ENCODE measurements at regions of chr3 and their contacts with region 1.

Region 1: GRCh38 chr3:4978204-4978965 is 852 bp upstream of the BHLHE40 start:
- DNase-seq: peak; percentile 73 to 93 (median 78)
- H3K4me3 ChIP-seq: peak overlapping the region; percentile 54 to 93
- H3K4me3 Mint-ChIP-seq: peak overlapping the region; percentile 93 to 100 (median 98)
- H3K27ac ChIP-seq: peak overlapping the region; percentile 91
- H3K27ac Mint-ChIP-seq: peak overlapping the region; percentile 95 to 100 (median 99)
- H3K4me1 ChIP-seq: peaks cover 48% of the 10 kb centered on the region
- H3K4me1 Mint-ChIP-seq: peaks cover 23 to 64% (median 46%) of the 10 kb centered on the region in 4 donors
- H3K27me3 ChIP-seq: no peaks in the 10 kb centered on the region
- H3K27me3 Mint-ChIP-seq: no peaks in the 10 kb centered on the region

Region 2: GRCh38 chr3:4722103-4722502 is 256.3 kb before region 1 on chr3:
- CTCF ChIA-PET with region 1: interaction called, 15 read pairs
- POLR2A ChIA-PET with region 1: interaction called, 7 read pairs
- intact Hi-C with region 1: loop called (anchors 2 kb)
- DNase-seq: peak in 4 of 5 donors; percentile 23 to 47 (median 28)
- H3K4me3 ChIP-seq: no peak overlapping the region
- H3K4me3 Mint-ChIP-seq: no peak overlapping the region
- H3K27ac ChIP-seq: no peak overlapping the region
- H3K27ac Mint-ChIP-seq: peak overlapping the region in 5 of 7 donors; percentile 39 to 86 (median 65)
- H3K4me1 ChIP-seq: peaks cover 12% of the 10 kb centered on the region
- H3K4me1 Mint-ChIP-seq: peaks cover 16 to 23% (median 18%) of the 10 kb centered on the region in 4 donors
- H3K27me3 ChIP-seq: no peaks in the 10 kb centered on the region
- H3K27me3 Mint-ChIP-seq: no peaks in the 10 kb centered on the region

Region 3: DNA sequence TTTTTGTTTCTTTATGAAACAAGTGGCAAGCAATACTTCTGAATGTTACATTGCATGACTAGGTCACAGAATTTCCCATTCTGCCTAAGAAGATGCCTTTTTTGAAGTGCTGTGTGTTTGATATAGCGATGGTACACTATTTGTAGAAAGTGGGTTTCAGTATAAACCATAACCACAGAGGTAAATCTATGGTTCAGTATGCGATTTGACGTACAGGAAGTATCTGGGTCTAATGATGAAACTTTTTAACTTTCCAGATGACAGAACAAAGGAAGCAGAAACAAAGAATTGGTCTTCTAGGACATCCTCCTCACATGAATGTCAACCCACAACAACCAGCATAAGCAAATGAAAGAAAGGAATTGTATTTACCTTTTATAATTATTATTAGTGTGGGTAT is 132.5 kb before region 1 on chr3:
- CTCF ChIA-PET with region 1: interaction called, 7 read pairs
- POLR2A ChIA-PET with region 1: interaction called, 22 read pairs
- intact Hi-C with region 1: no loop called
- DNase-seq: peak in 4 of 5 donors; percentile 73 to 84 (median 76)
- H3K4me3 ChIP-seq: peak overlapping the region in 1 of 2 donors; percentile 27
- H3K4me3 Mint-ChIP-seq: peak overlapping the region in 7 of 8 donors; percentile 5 to 62 (median 35)
- H3K27ac ChIP-seq: peak overlapping the region; percentile 67
- H3K27ac Mint-ChIP-seq: peak overlapping the region; percentile 50 to 98 (median 94)
- H3K4me1 ChIP-seq: peaks cover 96% of the 10 kb centered on the region
- H3K4me1 Mint-ChIP-seq: peaks cover 70 to 93% (median 83%) of the 10 kb centered on the region in 4 donors
- H3K27me3 ChIP-seq: no peaks in the 10 kb centered on the region
- H3K27me3 Mint-ChIP-seq: no peaks in the 10 kb centered on the region

Region 4: GRCh38 chr3:4906107-4906621 is 72.2 kb before region 1 on chr3:
- CTCF ChIA-PET with region 1: interaction called, 9 read pairs
- POLR2A ChIA-PET with region 1: interaction called, 61 read pairs
- intact Hi-C with region 1: loop called (anchors 1 kb)
- DNase-seq: peak in 1 of 5 donors; percentile 46
- H3K4me3 ChIP-seq: no peak overlapping the region
- H3K4me3 Mint-ChIP-seq: peak overlapping the region in 3 of 8 donors; percentile 10 to 72 (median 36)
- H3K27ac ChIP-seq: peak overlapping the region; percentile 22
- H3K27ac Mint-ChIP-seq: peak overlapping the region; percentile 19 to 92 (median 76)
- H3K4me1 ChIP-seq: peaks cover 57% of the 10 kb centered on the region
- H3K4me1 Mint-ChIP-seq: peaks cover 39 to 73% (median 54%) of the 10 kb centered on the region in 4 donors
- H3K27me3 ChIP-seq: no peaks in the 10 kb centered on the region
- H3K27me3 Mint-ChIP-seq: no peaks in the 10 kb centered on the region

Region 5: GRCh38 chr3:5016218-5017161 is 38.1 kb after region 1 on chr3:
- CTCF ChIA-PET with region 1: interaction called, 251 read pairs
- POLR2A ChIA-PET with region 1: interaction called, 580 read pairs
- intact Hi-C with region 1: loop called (anchors 2 kb)
- DNase-seq: peak; percentile 32 to 78 (median 48)
- H3K4me3 ChIP-seq: no peak overlapping the region
- H3K4me3 Mint-ChIP-seq: peak overlapping the region; percentile 1 to 76 (median 61)
- H3K27ac ChIP-seq: no peak overlapping the region
- H3K27ac Mint-ChIP-seq: peak overlapping the region; percentile 82 to 97 (median 91)
- H3K4me1 ChIP-seq: peaks cover 71% of the 10 kb centered on the region
- H3K4me1 Mint-ChIP-seq: peaks cover 51 to 82% (median 67%) of the 10 kb centered on the region in 4 donors
- H3K27me3 ChIP-seq: no peaks in the 10 kb centered on the region
- H3K27me3 Mint-ChIP-seq: no peaks in the 10 kb centered on the region

Region 6: DNA sequence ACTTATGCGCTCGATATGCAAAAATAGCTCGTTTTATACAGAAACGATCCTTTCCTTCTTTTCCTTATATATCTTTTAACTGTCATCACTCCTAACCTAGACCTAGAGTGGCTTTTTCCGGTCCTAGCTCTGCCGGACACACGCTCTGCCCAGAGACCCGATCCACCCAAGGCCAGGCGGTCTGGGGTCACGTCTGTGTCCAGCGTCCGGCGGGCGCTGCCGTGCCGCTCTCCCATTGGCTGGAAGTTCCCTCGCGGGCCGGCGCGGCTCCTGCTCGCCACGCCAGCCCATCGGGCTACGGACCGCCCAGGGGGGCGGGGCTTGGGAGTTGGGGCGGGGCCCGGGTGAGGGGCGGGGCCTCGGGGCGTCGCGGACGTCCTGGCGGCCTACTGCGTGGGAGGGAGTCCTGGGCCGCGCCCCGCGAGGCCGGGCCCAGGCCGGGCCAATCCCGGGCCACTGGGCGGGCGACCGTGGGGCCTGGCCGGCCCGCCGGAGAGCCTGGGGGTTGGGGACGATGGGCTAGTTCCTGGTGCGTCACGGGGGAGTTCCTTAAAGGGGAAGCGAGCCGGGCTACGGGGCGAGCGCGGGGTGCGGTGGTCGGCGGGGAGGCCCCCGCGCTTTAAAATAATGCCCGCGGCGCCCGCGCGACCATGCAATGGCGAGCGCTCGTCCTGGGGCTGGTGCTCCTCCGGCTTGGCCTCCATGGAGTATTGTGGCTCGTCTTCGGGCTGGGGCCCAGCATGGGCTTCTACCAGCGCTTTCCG is 209.0 kb after region 1 on chr3 and contains the start of gene EDEM1:
- CTCF ChIA-PET with region 1: no interaction called
- POLR2A ChIA-PET with region 1: interaction called, 23 read pairs
- intact Hi-C with region 1: loop called (anchors 5 kb)
- DNase-seq: peak; percentile 92 to 94 (median 93)
- H3K4me3 ChIP-seq: peak within 1 kb of the TSS; percentile 80 to 85
- H3K4me3 Mint-ChIP-seq: peak within 1 kb of the TSS; percentile 93 to 100 (median 98)
- H3K27ac ChIP-seq: peak within 1 kb of the TSS; percentile 87
- H3K27ac Mint-ChIP-seq: peak within 1 kb of the TSS; percentile 98 to 99 (median 99)
- H3K4me1 ChIP-seq: peaks cover 16% of the 10 kb centered on the region
- H3K4me1 Mint-ChIP-seq: peaks cover 26 to 46% (median 32%) of the 10 kb centered on the region in 4 donors
- H3K27me3 ChIP-seq: no peaks in the 10 kb centered on the region
- H3K27me3 Mint-ChIP-seq: no peaks in the 10 kb centered on the region
- total RNA-seq, gene EDEM1: 146 to 153 TPM

Measured in CD4-positive, alpha-beta memory T cell (primary cell).